ENCODE measurements at regions of chr3 and their contacts with region 1.

Region 1: DNA sequence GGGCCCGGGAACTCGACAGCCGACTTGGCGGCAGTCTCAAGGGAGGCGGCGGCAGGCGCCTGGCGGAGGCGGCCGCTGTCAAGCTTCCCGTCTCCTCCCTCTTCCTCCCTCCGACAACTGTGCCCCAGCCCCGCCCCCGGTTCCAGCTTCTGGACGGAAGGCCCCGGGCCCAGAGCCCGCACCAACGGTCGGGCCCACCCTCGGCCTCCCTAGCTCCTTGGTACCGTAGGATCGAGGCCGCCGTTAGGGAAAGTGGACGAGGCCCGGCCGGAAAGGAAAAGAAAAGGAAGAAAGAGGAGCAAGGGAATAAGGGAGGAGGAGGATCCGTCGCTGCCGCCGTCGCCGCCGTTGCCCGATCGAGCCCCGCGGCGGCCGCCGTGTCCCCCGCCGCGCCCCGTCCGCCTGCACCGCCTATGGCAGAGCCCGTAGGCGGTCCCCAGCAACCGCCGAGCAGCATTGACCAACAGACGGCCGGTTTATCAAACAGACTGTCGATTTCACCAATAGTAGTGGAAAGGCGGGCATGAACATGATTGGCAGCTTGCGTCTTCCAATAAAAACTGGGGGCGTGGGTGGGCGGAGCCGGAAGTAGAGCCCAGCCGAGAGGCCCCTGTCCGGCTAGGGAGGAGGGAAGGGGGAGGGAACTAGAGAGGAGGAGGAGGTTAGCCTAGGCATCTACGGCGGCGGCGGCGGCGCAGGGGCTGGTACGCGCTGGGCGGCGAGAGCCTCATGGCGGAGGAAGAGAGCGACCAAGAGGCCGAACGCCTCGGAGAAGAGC is at the starts of genes CGGBP1 and ZNF654:
- DNase-seq: peak; percentile 99
- H3K4me3 ChIP-seq: peak within 1 kb of the TSS; percentile 84 to 94 (median 91)
- H3K27ac ChIP-seq: peak within 1 kb of the TSS; percentile 88
- H3K4me1 ChIP-seq: peaks cover 16% of the 10 kb centered on the region
- H3K27me3 ChIP-seq: no peaks in the 10 kb centered on the region
- CTCF ChIP-seq: no peak
- total RNA-seq, gene CGGBP1: 43.3 to 61.9 TPM
- total RNA-seq, gene ZNF654: 18.6 to 20.3 TPM

Region 2: GRCh38 chr3:88031642-88032077 is 27.1 kb before region 1 on chr3:
- CTCF ChIA-PET with region 1: no interaction called
- dilution Hi-C with region 1: no loop called
- in situ Hi-C with region 1: no loop called
- intact Hi-C with region 1: loop called (anchors 2 kb)
- DNase-seq: peak; percentile 16
- H3K4me3 ChIP-seq: peak overlapping the region; percentile 35 to 48 (median 46)
- H3K27ac ChIP-seq: peak overlapping the region; percentile 52
- H3K4me1 ChIP-seq: no peaks in the 10 kb centered on the region
- H3K27me3 ChIP-seq: no peaks in the 10 kb centered on the region
- CTCF ChIP-seq: no peak

Region 3: DNA sequence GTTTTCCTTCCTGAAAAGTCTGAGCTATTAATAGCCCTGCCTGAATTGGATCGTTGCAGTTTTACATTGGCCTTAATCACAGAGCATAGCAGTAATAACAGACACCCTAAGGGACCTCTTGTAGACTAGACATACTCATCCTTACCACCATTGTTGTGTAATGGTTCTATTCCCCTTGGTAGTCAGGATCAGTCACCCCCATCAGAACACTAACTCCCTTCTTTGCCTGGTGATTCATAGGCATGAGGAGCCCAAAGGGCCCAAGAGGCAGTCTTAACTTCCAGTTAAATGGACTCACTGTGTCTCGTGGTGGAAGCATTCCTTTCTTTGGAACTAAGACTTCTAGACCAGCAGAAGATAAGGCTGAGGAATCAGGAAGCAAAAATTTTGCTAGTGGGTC is 20.2 kb before region 1 on chr3:
- CTCF ChIA-PET with region 1: no interaction called
- dilution Hi-C with region 1: no loop called
- in situ Hi-C with region 1: no loop called
- intact Hi-C with region 1: loop called (anchors 2 kb)
- DNase-seq: peak; percentile 96
- H3K4me3 ChIP-seq: no peak overlapping the region
- H3K27ac ChIP-seq: peak overlapping the region; percentile 2
- H3K4me1 ChIP-seq: peaks cover 4% of the 10 kb centered on the region
- H3K27me3 ChIP-seq: no peaks in the 10 kb centered on the region
- CTCF ChIP-seq: no peak

Region 4: DNA sequence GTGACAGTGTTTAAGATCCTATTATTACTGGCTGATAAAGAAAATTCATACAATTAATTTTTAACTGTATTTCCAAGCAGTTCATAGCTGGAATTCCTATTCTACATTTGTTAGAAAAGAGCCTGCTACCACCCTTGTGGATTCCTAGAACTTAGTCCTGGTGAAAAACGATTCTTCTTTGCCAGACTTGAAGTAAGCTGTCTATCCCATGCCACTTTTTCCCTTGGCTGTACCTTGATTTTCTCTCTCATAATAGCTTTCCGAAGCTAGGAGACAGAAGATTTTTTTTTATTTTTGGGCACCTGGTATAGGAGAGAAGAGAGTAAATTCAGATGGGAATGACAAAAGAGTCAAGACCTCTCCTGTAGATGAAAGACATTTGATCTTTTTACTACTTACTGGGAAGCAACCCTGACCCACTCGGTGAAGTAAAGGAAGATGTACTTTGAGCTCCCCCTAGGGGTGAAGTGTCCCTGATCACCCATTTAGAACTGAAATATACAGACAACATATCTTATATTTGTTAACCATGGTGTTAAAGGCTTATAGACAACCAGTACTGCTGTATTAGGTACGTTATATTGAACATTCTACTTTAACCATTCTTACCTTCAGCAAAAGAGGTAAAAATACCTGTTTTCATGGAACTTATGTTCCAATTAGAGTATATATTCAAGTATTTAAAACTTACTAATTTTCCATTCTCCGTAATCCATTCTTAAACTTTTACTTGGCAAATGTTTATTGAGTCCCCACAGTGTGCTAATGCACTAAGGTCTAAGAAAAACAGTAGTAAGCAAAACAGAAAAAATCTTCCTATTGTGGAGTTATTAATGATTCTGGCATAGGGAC is 54.8 kb after region 1 on chr3:
- CTCF ChIA-PET with region 1: no interaction called
- dilution Hi-C with region 1: no loop called
- in situ Hi-C with region 1: no loop called
- intact Hi-C with region 1: loop called (anchors 1 kb)
- DNase-seq: peak; percentile 58
- H3K4me3 ChIP-seq: no peak overlapping the region
- H3K27ac ChIP-seq: no peak overlapping the region
- H3K4me1 ChIP-seq: no peaks in the 10 kb centered on the region
- H3K27me3 ChIP-seq: no peaks in the 10 kb centered on the region
- CTCF ChIP-seq: peak; percentile 69 to 71

Region 5: GRCh38 chr3:88149509-88150362 is 91.0 kb after region 1 on chr3 and contains the start of gene C3orf38:
- CTCF ChIA-PET with region 1: no interaction called
- dilution Hi-C with region 1: no loop called
- in situ Hi-C with region 1: no loop called
- intact Hi-C with region 1: loop called (anchors 1 kb)
- DNase-seq: peak; percentile 91
- H3K4me3 ChIP-seq: peak within 1 kb of the TSS; percentile 61 to 86 (median 70)
- H3K27ac ChIP-seq: peak within 1 kb of the TSS; percentile 73
- H3K4me1 ChIP-seq: peaks cover 8% of the 10 kb centered on the region
- H3K27me3 ChIP-seq: no peaks in the 10 kb centered on the region
- CTCF ChIP-seq: no peak
- total RNA-seq, gene C3orf38: 20.4 to 31.7 TPM

Region 6: DNA sequence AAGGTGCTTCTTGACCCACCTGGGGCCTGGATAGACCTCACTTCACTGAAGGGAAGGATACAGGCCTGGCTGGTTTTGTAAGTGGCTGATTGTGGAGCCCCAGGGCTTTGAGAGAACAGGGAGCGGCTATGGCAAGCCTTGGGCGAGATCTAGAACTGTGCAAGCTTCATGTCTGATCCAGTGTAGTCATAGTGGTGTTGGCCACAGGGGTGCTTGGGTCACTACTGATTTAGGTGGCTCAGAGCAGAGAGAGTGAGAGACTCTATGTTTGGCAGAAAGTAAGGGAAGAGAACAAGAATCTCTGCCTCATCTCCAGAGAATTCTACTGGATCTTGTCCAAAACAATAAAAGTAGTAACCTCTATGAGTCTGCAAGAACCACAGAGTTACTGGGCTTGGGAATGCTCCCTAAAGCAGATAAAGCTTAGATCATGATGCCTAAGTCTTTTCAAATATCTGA is 654.5 kb after region 1 on chr3:
- CTCF ChIA-PET with region 1: no interaction called
- dilution Hi-C with region 1: no loop called
- in situ Hi-C with region 1: no loop called
- intact Hi-C with region 1: no loop called
- DNase-seq: peak; percentile 98
- H3K4me3 ChIP-seq: no peak overlapping the region
- H3K27ac ChIP-seq: peak overlapping the region; percentile 60
- H3K4me1 ChIP-seq: peaks cover 8% of the 10 kb centered on the region
- H3K27me3 ChIP-seq: no peaks in the 10 kb centered on the region
- CTCF ChIP-seq: no peak